A549 (cell line): ENCODE measurements at regions of chr3 and their contacts with region 1.

Region 1: DNA sequence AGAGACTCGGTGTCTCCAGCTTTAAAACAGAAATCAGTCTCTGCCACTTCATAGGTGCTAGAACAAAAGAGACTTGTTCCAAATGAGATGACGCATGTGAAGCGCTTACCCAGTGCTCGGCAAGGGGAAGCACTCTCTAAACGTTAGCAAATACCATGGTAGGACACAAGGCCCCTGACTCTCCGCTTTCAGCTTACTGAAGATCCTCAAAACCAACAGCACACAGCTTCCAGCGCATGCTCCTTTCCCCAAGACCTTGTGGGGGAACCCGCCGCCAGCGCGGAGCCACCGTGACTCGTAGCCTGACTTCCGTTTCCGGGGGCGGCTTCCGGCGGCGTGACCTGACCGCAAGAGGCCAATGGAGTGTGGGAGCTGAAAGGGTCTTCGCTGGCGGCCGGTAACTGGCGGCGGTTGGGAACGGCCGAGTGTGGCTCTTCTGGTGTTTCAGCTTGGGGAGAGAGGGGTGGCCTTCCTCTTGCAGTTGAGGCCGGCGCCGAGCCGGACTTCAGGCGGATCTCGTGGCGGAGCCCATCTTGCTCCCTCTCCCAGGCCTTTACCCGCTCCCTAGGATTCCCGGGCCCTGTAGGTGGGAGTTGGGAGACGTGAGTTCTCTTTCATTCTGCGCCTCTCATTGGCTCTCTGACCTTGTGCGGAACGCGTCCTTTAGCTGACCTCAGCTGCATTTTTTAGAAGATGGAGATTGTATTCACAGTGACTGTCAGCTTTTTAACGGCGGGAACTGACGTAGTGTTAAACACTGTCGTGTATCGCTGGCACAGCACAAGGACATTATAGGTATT is at the start of gene THUMPD3:
- DNase-seq: peak; percentile 88 to 95
- ATAC-seq: peak; percentile 99 to 100
- H3K4me3 ChIP-seq: peak within 1 kb of the TSS; percentile 81
- H3K27ac ChIP-seq: peak within 1 kb of the TSS; percentile 90 to 93
- H3K4me1 ChIP-seq: peaks cover 19% of the 10 kb centered on the region
- CTCF ChIP-seq: no peak
- EP300 ChIP-seq: no peak
- POLR2A ChIP-seq: peak; percentile 88
- RAD21 ChIP-seq: no peak
- polyA plus RNA-seq, gene THUMPD3: 86.0 and 93.2 TPM in 2 replicates

Region 2: DNA sequence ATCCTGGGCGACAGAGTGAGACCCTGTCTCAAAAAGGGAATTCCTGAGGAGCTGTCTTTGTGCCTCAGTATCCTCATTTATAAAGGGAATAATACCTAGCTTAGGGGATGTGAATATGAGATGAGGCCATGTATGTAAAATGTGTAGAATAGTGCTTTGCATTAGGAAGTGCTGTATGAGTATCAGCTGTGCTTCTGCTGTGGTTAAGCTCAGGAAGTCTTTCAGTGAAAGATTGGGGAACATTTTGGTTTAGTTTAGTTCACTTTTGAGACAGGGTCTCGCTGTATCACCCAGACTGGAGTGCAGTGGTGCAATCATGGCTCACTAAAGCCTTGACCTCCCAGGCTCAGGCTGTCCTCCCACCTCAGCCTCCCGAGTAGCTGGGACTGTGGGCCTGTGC is 10.5 kb after region 1 on chr3:
- CTCF ChIA-PET with region 1: interaction called, 7 read pairs
- POLR2A ChIA-PET with region 1: interaction called, 13 read pairs
- DNase-seq: no peak
- ATAC-seq: no peak
- H3K4me3 ChIP-seq: no peak overlapping the region
- H3K27ac ChIP-seq: no peak overlapping the region
- H3K4me1 ChIP-seq: no peaks in the 10 kb centered on the region
- CTCF ChIP-seq: no peak
- EP300 ChIP-seq: no peak
- POLR2A ChIP-seq: no peak
- RAD21 ChIP-seq: no peak

Region 3: GRCh38 chr3:9384141-9384853 is 21.4 kb after region 1 on chr3:
- CTCF ChIA-PET with region 1: interaction called, 4 read pairs
- POLR2A ChIA-PET with region 1: interaction called, 10 read pairs
- DNase-seq: no peak
- ATAC-seq: peak; percentile 30 to 42; a peak in 3 of 6 replicates
- H3K4me3 ChIP-seq: no peak overlapping the region
- H3K27ac ChIP-seq: no peak overlapping the region
- H3K4me1 ChIP-seq: peaks cover 21% of the 10 kb centered on the region; the same call in 1 of the 3 replicates
- CTCF ChIP-seq: no peak
- EP300 ChIP-seq: no peak
- POLR2A ChIP-seq: no peak
- RAD21 ChIP-seq: no peak